Activated B cell treated with CpG ODN at 0.5 μM for 24 hours (primary cell): ENCODE measurements at regions of chr20 and their contacts with region 1.

Region 1: DNA sequence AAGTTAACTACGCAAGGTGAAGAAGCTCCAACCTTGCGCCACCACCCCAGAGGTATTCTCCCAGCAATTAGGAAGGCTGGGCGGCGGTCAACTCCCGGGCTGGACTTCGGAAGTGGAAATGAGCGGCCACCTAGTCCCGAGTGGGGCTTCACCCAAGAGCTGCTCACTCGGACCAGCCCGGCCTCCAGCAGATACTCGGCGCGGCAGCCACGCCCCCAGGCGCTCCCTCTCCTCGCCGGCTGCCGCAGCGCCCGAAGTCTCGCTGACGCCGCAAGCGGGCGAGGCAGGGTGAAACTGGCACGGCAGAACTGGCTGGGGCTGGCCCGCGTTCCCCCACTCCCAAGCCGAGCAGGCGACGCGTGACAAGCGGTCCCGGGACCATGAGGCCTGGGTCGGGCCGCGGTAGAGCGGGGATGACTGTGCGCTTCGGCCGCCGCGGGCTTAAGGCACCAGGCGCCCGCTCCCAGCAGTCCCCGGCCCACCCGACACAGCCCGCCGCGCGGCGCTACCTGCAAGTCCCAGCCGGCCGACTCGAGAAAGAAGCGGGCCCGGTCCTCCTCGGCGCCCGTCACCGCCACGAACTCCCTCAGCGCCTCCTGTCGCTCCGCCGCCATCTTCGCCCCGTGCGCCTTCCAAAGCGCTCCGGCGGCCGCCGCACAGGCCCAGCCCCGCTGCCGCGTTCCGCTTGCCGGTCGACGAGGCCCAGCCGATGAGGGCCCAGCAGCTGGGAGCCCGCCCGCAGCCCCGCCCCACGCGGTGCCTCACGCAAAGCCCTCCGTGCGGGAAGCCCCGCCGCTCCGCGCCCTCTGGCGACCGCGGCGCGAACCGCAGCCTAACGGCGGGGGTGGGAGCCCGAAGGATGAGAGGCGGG is at the start of gene NSFL1C:
- DNase-seq: peak; percentile 100
- ATAC-seq: peak; percentile 92
- H3K4me3 Mint-ChIP-seq: peak within 1 kb of the TSS; percentile 86
- H3K27ac Mint-ChIP-seq: peak within 1 kb of the TSS; percentile 89
- H3K4me1 Mint-ChIP-seq: peaks cover 81% of the 10 kb centered on the region
- H3K27me3 Mint-ChIP-seq: no peaks in the 10 kb centered on the region
- CTCF ChIP-seq: peak; percentile 93
- total RNA-seq, gene NSFL1C: 81.7 and 89.4 TPM in 2 replicates

Region 2: DNA sequence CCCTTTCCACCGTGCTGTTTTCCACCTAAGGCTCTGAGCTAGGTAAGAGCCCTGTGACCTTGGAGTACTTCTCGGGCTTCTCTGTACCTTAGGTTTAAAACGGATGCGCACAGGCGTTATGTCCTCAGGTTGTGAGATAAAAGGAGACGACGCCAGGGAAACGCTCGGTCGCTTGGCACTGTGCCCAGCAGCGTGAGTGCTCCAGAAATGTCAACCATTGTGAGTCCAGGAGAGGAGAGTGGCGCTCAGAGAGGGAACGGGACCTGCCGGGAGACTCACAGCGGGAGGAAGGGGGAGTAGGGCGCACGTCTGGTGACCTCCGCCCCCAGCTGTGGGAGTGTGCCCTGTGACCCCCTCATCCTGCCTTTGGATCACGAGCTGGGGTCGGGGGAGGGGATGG is 757.0 kb before region 1 on chr20:
- CTCF ChIA-PET with region 1: no interaction called
- POLR2A ChIA-PET with region 1: no interaction called
- intact Hi-C with region 1: no loop called
- DNase-seq: no peak
- ATAC-seq: no peak
- H3K4me3 Mint-ChIP-seq: no peak overlapping the region
- H3K27ac Mint-ChIP-seq: no peak overlapping the region
- H3K4me1 Mint-ChIP-seq: no peaks in the 10 kb centered on the region
- H3K27me3 Mint-ChIP-seq: peaks cover 38% of the 10 kb centered on the region
- CTCF ChIP-seq: no peak

Region 3: GRCh38 chr20:1225783-1226654 is 240.4 kb before region 1 on chr20 and contains the start of gene RAD21L1:
- CTCF ChIA-PET with region 1: no interaction called
- POLR2A ChIA-PET with region 1: no interaction called
- intact Hi-C with region 1: loop called (anchors 10 kb)
- DNase-seq: peak; percentile 56
- ATAC-seq: peak; percentile 89
- H3K4me3 Mint-ChIP-seq: peak within 1 kb of the TSS; percentile 76
- H3K27ac Mint-ChIP-seq: no peak within 1 kb of the TSS
- H3K4me1 Mint-ChIP-seq: peaks cover 13% of the 10 kb centered on the region
- H3K27me3 Mint-ChIP-seq: peaks cover 23% of the 10 kb centered on the region
- CTCF ChIP-seq: no peak
- total RNA-seq, gene RAD21L1: not detected in 2 replicates

Region 4: GRCh38 chr20:1325173-1326030 is 141.0 kb before region 1 on chr20:
- CTCF ChIA-PET with region 1: interaction called, 3 read pairs
- POLR2A ChIA-PET with region 1: interaction called, 7 read pairs
- intact Hi-C with region 1: loop called (anchors 1 kb)
- DNase-seq: peak; percentile 97
- ATAC-seq: peak; percentile 88
- H3K4me3 Mint-ChIP-seq: no peak overlapping the region
- H3K27ac Mint-ChIP-seq: no peak overlapping the region
- H3K4me1 Mint-ChIP-seq: peaks cover 38% of the 10 kb centered on the region
- H3K27me3 Mint-ChIP-seq: no peaks in the 10 kb centered on the region
- CTCF ChIP-seq: no peak

Region 5: DNA sequence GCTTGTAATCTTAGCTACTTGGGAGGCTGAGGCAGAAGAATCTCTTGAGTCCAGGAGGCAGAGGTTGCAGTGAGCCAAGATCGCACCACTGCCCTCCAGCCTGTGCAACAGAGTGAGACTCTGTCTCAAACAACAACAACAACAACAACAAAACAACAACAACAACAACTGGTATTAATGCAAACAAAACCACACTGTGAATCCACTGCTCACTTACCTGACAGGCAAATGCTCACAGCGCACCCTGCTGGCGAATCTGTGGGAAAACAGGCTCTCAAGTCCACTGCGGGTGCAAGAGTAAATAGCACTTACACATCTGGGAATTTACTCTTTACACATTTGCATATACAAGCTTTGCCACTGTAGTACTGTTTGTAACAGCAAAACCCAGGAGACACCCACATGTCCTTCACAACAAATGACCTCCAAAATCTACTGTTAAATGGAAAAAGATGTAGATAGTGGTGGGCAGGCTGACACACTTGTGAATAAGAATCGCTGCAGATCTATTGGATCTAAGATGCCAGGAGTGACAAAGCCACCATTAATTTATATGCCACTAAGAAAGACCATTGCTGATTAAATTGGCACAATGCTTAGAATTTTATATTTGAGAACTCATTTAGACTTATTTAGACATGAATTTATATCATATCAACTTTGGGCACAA is 29.1 kb before region 1 on chr20:
- CTCF ChIA-PET with region 1: interaction called, 12 read pairs
- POLR2A ChIA-PET with region 1: interaction called, 4 read pairs
- intact Hi-C with region 1: no loop called
- DNase-seq: peak; percentile 57
- ATAC-seq: peak; percentile 59
- H3K4me3 Mint-ChIP-seq: no peak overlapping the region
- H3K27ac Mint-ChIP-seq: no peak overlapping the region
- H3K4me1 Mint-ChIP-seq: peaks cover 34% of the 10 kb centered on the region
- H3K27me3 Mint-ChIP-seq: no peaks in the 10 kb centered on the region
- CTCF ChIP-seq: peak; percentile 81

Region 6: DNA sequence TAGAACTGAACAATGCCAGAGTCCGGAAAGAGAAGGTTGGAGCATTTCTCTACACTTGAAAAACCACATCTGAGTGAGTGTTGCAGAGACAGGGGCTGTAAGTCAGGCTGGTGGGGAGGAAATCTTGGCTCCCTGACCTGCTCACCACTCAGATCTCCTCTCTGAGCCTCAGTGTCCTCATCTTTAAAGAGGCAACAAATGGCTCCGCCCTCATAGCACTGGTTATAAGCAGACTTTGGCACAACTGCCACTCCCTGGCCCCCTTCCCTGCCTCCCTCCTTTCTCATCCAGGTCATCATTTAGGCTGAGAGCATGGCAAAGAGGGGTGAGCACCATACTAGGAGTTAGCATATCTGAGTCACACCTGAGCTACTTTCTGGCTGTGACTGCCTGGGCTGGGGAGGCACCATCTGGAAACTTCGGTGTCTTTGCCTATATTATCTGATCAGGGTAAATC is 180.6 kb after region 1 on chr20:
- CTCF ChIA-PET with region 1: no interaction called
- POLR2A ChIA-PET with region 1: no interaction called
- intact Hi-C with region 1: no loop called
- DNase-seq: no peak
- ATAC-seq: no peak
- H3K4me3 Mint-ChIP-seq: no peak overlapping the region
- H3K27ac Mint-ChIP-seq: no peak overlapping the region
- H3K4me1 Mint-ChIP-seq: peaks cover 7% of the 10 kb centered on the region
- H3K27me3 Mint-ChIP-seq: peaks cover 4% of the 10 kb centered on the region
- CTCF ChIP-seq: no peak

Region 7: GRCh38 chr20:1776681-1777475 is 310.4 kb after region 1 on chr20:
- CTCF ChIA-PET with region 1: no interaction called
- POLR2A ChIA-PET with region 1: no interaction called
- intact Hi-C with region 1: loop called (anchors 1 kb)
- DNase-seq: peak; percentile 80
- ATAC-seq: peak; percentile 94
- H3K4me3 Mint-ChIP-seq: peak overlapping the region; percentile 83
- H3K27ac Mint-ChIP-seq: peak overlapping the region; percentile 57
- H3K4me1 Mint-ChIP-seq: peaks cover 17% of the 10 kb centered on the region
- H3K27me3 Mint-ChIP-seq: peaks cover 7% of the 10 kb centered on the region
- CTCF ChIP-seq: peak; percentile 22